IMR-90 (cell line): ENCODE measurements at regions of chr6 and their contacts with region 1.

Region 1: DNA sequence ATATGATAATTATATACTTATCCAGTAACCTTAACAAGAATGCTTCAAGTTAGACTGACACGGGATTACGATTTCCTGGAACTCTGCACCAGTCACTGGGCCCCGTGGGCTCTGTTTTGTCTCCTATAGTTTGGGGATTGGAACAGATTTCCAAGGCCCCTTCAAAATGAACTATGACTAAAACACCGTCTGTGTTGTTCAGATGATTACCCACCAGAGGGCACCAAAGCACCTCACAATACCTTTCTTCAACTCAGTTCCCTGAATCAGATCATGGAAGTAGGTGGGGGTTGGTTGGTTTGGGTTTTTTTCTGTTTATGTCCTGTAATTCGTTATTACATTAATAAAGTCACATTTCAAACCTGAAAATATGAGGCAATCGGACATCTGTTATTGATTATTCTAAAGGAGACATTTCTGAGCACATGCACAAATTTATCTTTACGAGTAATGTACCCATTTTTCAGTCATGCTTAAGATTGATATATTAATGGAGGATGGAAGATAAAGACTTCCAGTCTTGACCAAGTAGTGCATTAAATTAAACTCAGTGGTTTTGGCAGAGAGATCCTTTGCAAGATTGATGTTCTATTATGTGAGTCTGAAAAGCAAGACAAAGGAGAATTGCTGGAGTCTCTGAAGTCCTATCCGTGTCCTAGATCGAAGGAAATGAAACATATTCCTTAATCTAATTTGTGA is 112.0 kb upstream of the COL21A1 start:
- DNase-seq: peak; percentile 79
- ATAC-seq: peak; percentile 90
- H3K4me3 ChIP-seq: no peak overlapping the region
- H3K27ac ChIP-seq: no peak overlapping the region
- H3K4me1 ChIP-seq: peaks cover 3% of the 10 kb centered on the region
- H3K27me3 ChIP-seq: no peaks in the 10 kb centered on the region
- CTCF ChIP-seq: peak; percentile 88
- POLR2A ChIP-seq: no peak
- RAD21 ChIP-seq: peak; percentile 94

Region 2: DNA sequence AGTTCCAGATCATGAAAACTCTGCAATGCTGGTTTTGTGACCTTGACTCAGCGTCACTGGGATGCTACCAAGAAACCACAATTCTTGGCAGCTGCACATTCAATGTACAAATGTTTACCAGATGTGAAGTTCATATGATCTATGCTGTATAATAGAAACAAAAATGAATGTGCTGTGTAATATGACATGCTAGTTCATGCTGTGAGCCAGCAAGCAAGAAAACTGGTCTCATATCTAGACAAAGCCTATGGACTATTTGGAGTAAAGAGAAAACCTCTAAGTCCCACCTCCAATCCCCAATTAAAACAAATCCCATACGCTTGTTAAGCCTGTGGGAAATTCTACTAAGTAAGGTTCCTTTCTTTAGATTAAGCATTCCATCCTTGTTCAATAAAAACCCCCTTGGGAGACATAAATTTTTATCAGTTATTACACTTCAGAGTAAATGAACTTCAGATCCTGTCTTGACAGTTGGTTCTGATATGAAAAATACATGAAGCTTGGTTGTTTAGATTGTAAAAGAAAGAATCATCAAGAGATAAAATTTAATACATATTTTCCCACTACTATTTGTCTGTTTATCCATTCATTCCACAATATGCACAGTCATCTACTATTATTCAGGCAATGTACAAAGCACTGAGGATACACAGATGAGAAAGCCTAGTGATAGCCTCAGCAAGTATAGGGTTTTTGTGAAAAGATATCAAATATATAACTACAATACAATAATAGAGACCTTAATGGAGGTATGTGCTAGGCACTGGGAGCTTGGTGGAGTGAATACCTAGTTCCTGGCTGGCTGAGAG is 132.1 kb before region 1 on chr6:
- CTCF ChIA-PET with region 1: no interaction called
- POLR2A ChIA-PET with region 1: no interaction called
- dilution Hi-C with region 1: no loop called
- in situ Hi-C with region 1: no loop called
- intact Hi-C with region 1: no loop called
- DNase-seq: peak; percentile 46
- ATAC-seq: peak; percentile 53
- H3K4me3 ChIP-seq: no peak overlapping the region
- H3K27ac ChIP-seq: no peak overlapping the region
- H3K4me1 ChIP-seq: no peaks in the 10 kb centered on the region
- H3K27me3 ChIP-seq: no peaks in the 10 kb centered on the region
- CTCF ChIP-seq: no peak
- POLR2A ChIP-seq: no peak
- RAD21 ChIP-seq: no peak

Region 3: GRCh38 chr6:56314683-56315523 is 44.4 kb before region 1 on chr6:
- CTCF ChIA-PET with region 1: no interaction called
- POLR2A ChIA-PET with region 1: no interaction called
- dilution Hi-C with region 1: no loop called
- in situ Hi-C with region 1: no loop called
- intact Hi-C with region 1: loop called (anchors 2 kb)
- DNase-seq: peak; percentile 50
- ATAC-seq: peak; percentile 77
- H3K4me3 ChIP-seq: no peak overlapping the region
- H3K27ac ChIP-seq: no peak overlapping the region
- H3K4me1 ChIP-seq: peaks cover 2% of the 10 kb centered on the region; the same call in 1 of the 2 replicates
- H3K27me3 ChIP-seq: no peaks in the 10 kb centered on the region; the same call in 1 of the 2 replicates
- CTCF ChIP-seq: peak; percentile 77
- POLR2A ChIP-seq: no peak
- RAD21 ChIP-seq: peak; percentile 87

Region 4: GRCh38 chr6:56542364-56543331 is 183.3 kb after region 1 on chr6:
- CTCF ChIA-PET with region 1: no interaction called
- POLR2A ChIA-PET with region 1: no interaction called
- dilution Hi-C with region 1: no loop called
- in situ Hi-C with region 1: no loop called
- intact Hi-C with region 1: loop called (anchors 5 kb)
- DNase-seq: peak; percentile 98
- ATAC-seq: peak; percentile 95
- H3K4me3 ChIP-seq: peak overlapping the region; percentile 79
- H3K27ac ChIP-seq: peak overlapping the region; percentile 97
- H3K4me1 ChIP-seq: peaks cover 2% of the 10 kb centered on the region
- H3K27me3 ChIP-seq: no peaks in the 10 kb centered on the region
- CTCF ChIP-seq: peak; percentile 38
- POLR2A ChIP-seq: peak; percentile 90
- RAD21 ChIP-seq: peak; percentile 18; the same call in 1 of the 2 replicates

Region 5: DNA sequence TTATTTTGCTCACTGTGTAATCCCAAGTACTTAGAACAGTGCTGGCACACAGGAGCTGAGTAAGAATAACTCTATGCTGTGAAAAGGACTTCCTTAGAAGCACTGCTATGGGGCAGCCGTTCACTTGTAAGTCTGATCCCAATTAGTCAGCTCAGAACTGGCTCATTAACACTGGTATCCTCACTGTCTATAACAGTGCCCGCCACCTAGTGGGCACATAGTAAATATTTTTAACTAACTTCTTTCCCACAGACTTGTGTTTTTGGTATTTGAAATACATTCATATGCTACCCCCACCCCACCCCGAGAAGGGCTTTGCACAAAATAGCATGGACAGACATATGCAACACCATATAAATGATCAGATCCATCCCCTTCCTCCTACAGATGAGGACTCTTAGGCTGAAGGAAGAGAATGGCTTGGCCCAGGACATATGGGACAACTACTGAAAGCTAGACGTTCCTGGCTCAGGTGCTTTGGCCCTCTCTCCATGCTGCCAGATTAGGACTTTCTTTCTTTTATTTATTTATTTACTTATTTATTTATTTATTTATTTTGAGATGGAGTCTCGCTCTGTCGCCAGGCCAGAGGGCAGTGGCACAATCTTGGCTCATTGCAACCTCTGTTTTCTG is 236.3 kb after region 1 on chr6:
- CTCF ChIA-PET with region 1: interaction called, 3 read pairs
- POLR2A ChIA-PET with region 1: no interaction called
- dilution Hi-C with region 1: loop called (anchors 25 kb)
- in situ Hi-C with region 1: loop called (anchors 5 kb)
- intact Hi-C with region 1: loop called (anchors 1 kb)
- DNase-seq: peak; percentile 30
- ATAC-seq: peak; percentile 60
- H3K4me3 ChIP-seq: no peak overlapping the region
- H3K27ac ChIP-seq: no peak overlapping the region
- H3K4me1 ChIP-seq: peaks cover 2% of the 10 kb centered on the region
- H3K27me3 ChIP-seq: no peaks in the 10 kb centered on the region
- CTCF ChIP-seq: peak; percentile 50
- POLR2A ChIP-seq: no peak
- RAD21 ChIP-seq: peak; percentile 16; the same call in 1 of the 2 replicates

Region 6: GRCh38 chr6:56757588-56757984 is 398.2 kb after region 1 on chr6:
- CTCF ChIA-PET with region 1: no interaction called
- POLR2A ChIA-PET with region 1: no interaction called
- dilution Hi-C with region 1: no loop called
- in situ Hi-C with region 1: no loop called
- intact Hi-C with region 1: loop called (anchors 5 kb)
- DNase-seq: peak; percentile 71
- ATAC-seq: peak; percentile 52
- H3K4me3 ChIP-seq: no peak overlapping the region
- H3K27ac ChIP-seq: peak overlapping the region; percentile 95
- H3K4me1 ChIP-seq: peaks cover 22% of the 10 kb centered on the region
- H3K27me3 ChIP-seq: no peaks in the 10 kb centered on the region
- CTCF ChIP-seq: peak; percentile 58
- POLR2A ChIP-seq: no peak
- RAD21 ChIP-seq: peak; percentile 66